Aorta (tissue), 5 donors: ENCODE measurements at regions of chr9 and their contacts with region 1.

Region 1: GRCh38 chr9:129487642-129488409 is 133.1 kb downstream of the C9orf50 start:
- DNase-seq: peak; percentile 82 to 85
- ATAC-seq: peak; percentile 24
- H3K4me3 ChIP-seq: no peak overlapping the region
- H3K27ac ChIP-seq: peak overlapping the region; percentile 95 to 99
- H3K4me1 ChIP-seq: no peaks in the 10 kb centered on the region
- H3K27me3 ChIP-seq: no peaks in the 10 kb centered on the region

Region 2: DNA sequence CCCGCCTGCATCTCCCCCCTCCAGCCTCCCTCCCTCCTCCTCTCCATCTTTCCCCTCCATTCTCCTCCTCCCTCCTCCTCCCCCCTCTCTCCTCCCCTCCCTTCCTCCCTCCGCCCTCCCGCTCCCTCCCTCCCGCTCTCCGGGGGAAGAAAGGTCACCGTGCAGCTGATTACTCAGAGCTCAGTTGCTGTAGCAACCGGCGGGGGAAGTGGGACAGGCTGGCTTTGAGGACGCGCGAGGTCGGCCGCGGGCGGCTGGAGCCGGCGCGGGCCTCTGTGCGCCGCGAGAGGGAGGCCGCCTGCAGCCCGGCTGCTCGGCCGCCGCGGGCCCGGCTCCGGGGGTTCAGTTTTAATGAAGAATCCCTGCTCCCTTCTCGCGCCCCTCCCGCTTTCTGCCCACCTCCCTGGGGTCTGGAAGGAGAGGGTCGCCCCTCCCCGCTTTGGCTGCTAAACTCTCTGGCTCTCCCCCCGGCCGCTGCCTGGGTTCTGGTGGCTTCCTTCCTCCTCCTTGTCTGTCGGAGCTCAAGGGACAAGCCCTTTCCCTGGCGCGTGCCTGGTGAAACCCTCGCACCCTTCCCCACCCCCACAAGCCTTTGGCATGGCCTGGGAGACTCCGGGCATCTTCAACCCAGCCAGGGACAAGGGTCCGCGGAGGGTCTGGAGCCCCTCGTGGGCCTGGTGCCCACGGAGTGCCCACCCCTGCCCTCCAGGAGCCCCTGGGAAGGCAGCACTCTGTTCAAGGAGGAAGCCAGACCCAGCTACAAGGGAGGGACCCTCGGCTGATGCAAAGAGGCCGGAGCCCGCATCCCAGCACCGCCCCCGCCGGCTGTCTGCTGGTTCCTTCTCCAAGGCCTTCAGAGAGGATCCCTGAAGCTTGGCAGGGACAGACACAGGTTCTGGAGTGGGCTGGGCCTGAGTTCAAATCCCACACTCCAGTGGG is 27.2 kb before region 1 on chr9:
- intact Hi-C with region 1: loop called in 1 of 2 experiments (anchors 1 kb)
- DNase-seq: peak; percentile 98 to 99
- ATAC-seq: peak; percentile 94
- H3K4me3 ChIP-seq: peak overlapping the region in 1 of 2 donors; percentile 12
- H3K27ac ChIP-seq: peak overlapping the region; percentile 54 to 88
- H3K4me1 ChIP-seq: no peaks in the 10 kb centered on the region
- H3K27me3 ChIP-seq: no peaks in the 10 kb centered on the region